Activated CD8-positive, alpha-beta memory T cell treated with anti-CD3 and anti-CD28 coated beads, Interleukin-2, amount 10 ng/mL, durations not matched to agents 7 days and 5 days (primary cell): ENCODE measurements at regions of chr9 and their contacts with region 1.

Region 1: DNA sequence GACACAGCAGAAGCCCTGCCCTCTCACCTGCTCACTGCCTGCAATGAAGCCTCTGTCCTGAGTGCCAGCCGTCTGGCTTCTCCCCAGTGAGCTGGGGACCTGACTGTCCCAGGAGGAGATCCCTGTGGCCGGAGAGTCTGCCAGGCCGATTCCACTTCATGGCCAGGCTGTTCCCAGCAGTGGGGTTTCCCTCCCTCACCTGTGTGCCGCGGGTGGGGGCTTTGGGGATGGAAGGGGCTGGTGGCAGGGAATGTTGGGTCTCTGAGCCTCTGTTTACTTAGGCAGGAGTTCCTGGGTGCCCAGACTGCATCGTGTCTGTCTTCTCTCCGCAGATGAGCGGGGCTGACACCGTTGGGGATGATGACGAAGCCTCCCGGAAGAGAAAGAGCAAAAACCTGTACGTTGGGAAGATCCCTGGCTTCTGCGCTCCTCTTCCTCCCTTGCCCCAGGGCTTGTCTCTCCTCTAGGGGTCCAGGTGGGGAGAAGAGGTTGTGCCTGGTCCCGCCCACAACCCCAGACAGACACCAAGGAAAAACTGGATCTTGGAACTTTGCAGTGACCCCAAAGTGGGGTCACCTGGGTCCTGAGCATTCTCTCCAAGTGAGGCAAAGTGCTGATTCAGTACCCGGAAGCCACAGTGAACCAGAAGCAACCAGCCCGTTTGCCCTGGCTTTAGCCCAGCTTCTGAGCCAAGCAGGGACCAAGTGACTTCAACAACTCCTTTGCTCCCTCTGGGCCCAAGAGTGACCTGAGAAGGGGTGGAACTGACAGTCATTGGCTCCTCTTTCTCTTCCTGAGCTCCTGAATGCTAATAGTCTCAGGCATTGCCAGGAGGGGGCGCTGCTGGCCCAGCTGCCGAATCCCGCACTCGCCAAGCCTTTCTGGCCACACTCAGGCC is 127.7 kb downstream of the RGS3 start:
- DNase-seq: peak; percentile 68
- ATAC-seq: peak; percentile 56
- H3K4me3 Mint-ChIP-seq: no peak overlapping the region
- H3K27ac Mint-ChIP-seq: peak overlapping the region; percentile 2
- H3K4me1 Mint-ChIP-seq: peaks cover 34% of the 10 kb centered on the region
- H3K27me3 Mint-ChIP-seq: no peaks in the 10 kb centered on the region

Region 2: GRCh38 chr9:113446323-113446740 is 144.9 kb before region 1 on chr9:
- CTCF ChIA-PET with region 1: interaction called, 50 read pairs
- DNase-seq: no peak
- ATAC-seq: no peak
- H3K4me3 Mint-ChIP-seq: no peak overlapping the region
- H3K27ac Mint-ChIP-seq: no peak overlapping the region
- H3K4me1 Mint-ChIP-seq: peaks cover 2% of the 10 kb centered on the region
- H3K27me3 Mint-ChIP-seq: no peaks in the 10 kb centered on the region

Region 3: GRCh38 chr9:113511856-113512761 is 79.1 kb before region 1 on chr9:
- CTCF ChIA-PET with region 1: interaction called, 11 read pairs
- DNase-seq: peak; percentile 93
- ATAC-seq: peak; percentile 74
- H3K4me3 Mint-ChIP-seq: peak overlapping the region; percentile 42
- H3K27ac Mint-ChIP-seq: peak overlapping the region; percentile 87
- H3K4me1 Mint-ChIP-seq: peaks cover 57% of the 10 kb centered on the region
- H3K27me3 Mint-ChIP-seq: no peaks in the 10 kb centered on the region

Region 4: DNA sequence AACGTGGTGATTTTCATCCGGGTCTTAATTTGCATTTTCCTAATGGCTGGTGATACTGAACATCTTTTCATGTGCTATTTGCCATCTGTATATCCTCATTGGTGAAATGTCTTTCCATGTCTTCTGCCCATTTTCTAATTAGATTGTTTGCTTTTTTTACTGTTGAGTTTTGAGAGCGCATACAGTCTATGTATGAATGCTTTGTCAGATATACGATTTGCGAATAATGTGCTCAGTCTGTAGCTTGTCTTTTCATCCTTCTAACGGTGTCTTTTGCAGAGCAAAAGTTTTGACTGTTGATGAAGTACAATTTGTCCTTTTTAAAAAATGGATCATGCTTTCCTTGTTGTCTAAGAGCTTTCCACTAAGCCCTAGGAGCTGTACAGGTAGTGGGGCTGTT is 15.3 kb after region 1 on chr9:
- CTCF ChIA-PET with region 1: interaction called, 11 read pairs
- DNase-seq: no peak
- ATAC-seq: no peak
- H3K4me3 Mint-ChIP-seq: no peak overlapping the region
- H3K27ac Mint-ChIP-seq: no peak overlapping the region
- H3K4me1 Mint-ChIP-seq: peaks cover 4% of the 10 kb centered on the region
- H3K27me3 Mint-ChIP-seq: no peaks in the 10 kb centered on the region

Region 5: GRCh38 chr9:113746486-113746885 is 155.2 kb after region 1 on chr9:
- CTCF ChIA-PET with region 1: no interaction called
- DNase-seq: no peak
- ATAC-seq: no peak
- H3K4me3 Mint-ChIP-seq: no peak overlapping the region
- H3K27ac Mint-ChIP-seq: no peak overlapping the region
- H3K4me1 Mint-ChIP-seq: no peaks in the 10 kb centered on the region
- H3K27me3 Mint-ChIP-seq: peaks cover 4% of the 10 kb centered on the region